Endothelial cell of umbilical vein (primary cell): ENCODE measurements at regions of chr21 and their contacts with region 1.

Region 1: DNA sequence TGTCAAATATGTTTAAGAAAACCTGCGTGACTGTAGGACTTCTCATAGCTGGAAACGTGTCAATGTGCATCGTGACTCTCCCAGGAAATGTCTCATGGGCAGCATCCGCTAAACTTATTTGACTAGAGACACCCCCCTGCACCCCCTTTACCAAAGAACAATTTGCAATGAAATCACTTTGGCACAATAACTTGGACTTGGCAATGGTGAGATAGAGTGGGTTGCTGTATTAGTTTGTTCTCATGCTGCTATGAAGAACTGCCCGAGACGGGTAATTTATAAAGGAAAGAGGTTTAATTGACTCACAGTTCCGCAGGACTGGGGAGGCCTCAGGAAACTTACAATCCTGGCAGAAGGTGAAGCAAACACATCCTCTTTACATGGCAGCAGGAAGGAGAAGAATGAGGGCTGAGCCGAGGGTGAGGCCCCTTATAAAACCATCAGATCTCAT is 13.8 kb downstream of the CLDN14 start:
- DNase-seq: peak; percentile 74
- H3K4me3 ChIP-seq: no peak overlapping the region
- H3K27ac ChIP-seq: peak overlapping the region; percentile 56
- H3K4me1 ChIP-seq: peaks cover 15% of the 10 kb centered on the region
- H3K27me3 ChIP-seq: no peaks in the 10 kb centered on the region
- CTCF ChIP-seq: no peak
- POLR2A ChIP-seq: no peak

Region 2: GRCh38 chr21:36478207-36478701 is 12.2 kb after region 1 on chr21:
- CTCF ChIA-PET with region 1: interaction called, 4 read pairs
- POLR2A ChIA-PET with region 1: no interaction called
- dilution Hi-C with region 1: no loop called
- intact Hi-C with region 1: loop called (anchors 1 kb)
- DNase-seq: peak; percentile 85
- H3K4me3 ChIP-seq: no peak overlapping the region
- H3K27ac ChIP-seq: peak overlapping the region; percentile 98
- H3K4me1 ChIP-seq: peaks cover 30% of the 10 kb centered on the region
- H3K27me3 ChIP-seq: no peaks in the 10 kb centered on the region
- CTCF ChIP-seq: no peak
- POLR2A ChIP-seq: peak; percentile 32